T-cell (primary cell): ENCODE measurements at regions of chr22 and their contacts with region 1.

Region 1: GRCh38 chr22:38290347-38290746 is 17.5 kb upstream of the TMEM184B start:
- DNase-seq: no peak
- ATAC-seq: no peak
- H3K4me3 ChIP-seq: no peak overlapping the region
- H3K4me3 Mint-ChIP-seq: no peak overlapping the region
- H3K27ac ChIP-seq: no peak overlapping the region
- H3K27ac Mint-ChIP-seq: no peak overlapping the region
- H3K4me1 ChIP-seq: no peaks in the 10 kb centered on the region
- H3K4me1 Mint-ChIP-seq: no peaks in the 10 kb centered on the region
- H3K27me3 ChIP-seq: no peaks in the 10 kb centered on the region
- H3K27me3 Mint-ChIP-seq: no peaks in the 10 kb centered on the region

Region 2: GRCh38 chr22:38623351-38623750 is 333.0 kb after region 1 on chr22:
- CTCF ChIA-PET with region 1: no interaction called
- POLR2A ChIA-PET with region 1: interaction called in 1 of 2 experiments, 14 read pairs
- DNase-seq: no peak
- ATAC-seq: no peak
- H3K4me3 ChIP-seq: no peak overlapping the region
- H3K4me3 Mint-ChIP-seq: no peak overlapping the region
- H3K27ac ChIP-seq: no peak overlapping the region
- H3K27ac Mint-ChIP-seq: no peak overlapping the region
- H3K4me1 ChIP-seq: no peaks in the 10 kb centered on the region
- H3K4me1 Mint-ChIP-seq: no peaks in the 10 kb centered on the region
- H3K27me3 ChIP-seq: peaks cover 0 to 14% of the 10 kb centered on the region in 2 experiments
- H3K27me3 Mint-ChIP-seq: peaks cover 0 to 7% of the 10 kb centered on the region in 2 donors